ENCODE measurements at regions of chr14 and their contacts with region 1.

Region 1: DNA sequence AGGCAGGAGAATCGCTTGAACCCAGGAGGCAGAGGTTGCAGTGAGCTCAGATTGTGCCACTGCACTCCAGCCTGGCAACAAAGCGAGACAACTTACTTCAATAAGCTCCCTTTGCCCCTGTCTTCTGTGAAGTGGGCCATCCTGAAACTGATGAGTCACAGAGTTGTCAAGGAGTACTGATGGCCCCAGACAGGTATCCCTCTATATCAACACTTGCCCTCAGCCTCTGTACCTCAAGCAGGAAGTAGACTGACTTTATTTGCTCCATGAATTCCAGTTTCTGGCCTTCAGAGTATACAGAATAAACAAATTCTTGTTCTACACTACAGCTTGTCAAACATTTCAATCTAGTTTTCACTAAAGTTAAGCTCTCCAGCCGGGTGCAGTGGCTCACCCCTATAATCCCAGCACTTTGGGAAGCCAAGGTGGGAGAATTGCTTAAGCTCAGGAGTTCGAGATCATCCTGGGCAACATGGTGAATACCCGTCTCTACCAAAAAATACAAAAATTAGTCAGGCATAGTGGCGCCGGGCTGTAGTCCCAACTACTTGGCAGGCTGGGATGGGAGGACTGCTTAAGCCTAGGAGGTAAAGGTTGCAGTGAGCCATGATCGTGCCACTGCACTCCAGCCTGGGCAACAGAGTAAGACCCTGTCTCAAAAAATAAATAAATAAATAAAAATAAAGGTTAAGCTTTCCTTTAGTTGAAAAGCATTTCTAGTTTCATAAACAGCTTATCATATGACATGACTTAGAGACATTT is 16.4 kb upstream of the LRP10 start:
- DNase-seq: no peak
- H3K4me3 ChIP-seq: no peak overlapping the region
- H3K4me1 ChIP-seq: 0 out of 2 replicates have a peak, but pooled peaks cover 2% of the 10 kb centered on the region
- H3K27me3 ChIP-seq: no peaks in the 10 kb centered on the region

Region 2: DNA sequence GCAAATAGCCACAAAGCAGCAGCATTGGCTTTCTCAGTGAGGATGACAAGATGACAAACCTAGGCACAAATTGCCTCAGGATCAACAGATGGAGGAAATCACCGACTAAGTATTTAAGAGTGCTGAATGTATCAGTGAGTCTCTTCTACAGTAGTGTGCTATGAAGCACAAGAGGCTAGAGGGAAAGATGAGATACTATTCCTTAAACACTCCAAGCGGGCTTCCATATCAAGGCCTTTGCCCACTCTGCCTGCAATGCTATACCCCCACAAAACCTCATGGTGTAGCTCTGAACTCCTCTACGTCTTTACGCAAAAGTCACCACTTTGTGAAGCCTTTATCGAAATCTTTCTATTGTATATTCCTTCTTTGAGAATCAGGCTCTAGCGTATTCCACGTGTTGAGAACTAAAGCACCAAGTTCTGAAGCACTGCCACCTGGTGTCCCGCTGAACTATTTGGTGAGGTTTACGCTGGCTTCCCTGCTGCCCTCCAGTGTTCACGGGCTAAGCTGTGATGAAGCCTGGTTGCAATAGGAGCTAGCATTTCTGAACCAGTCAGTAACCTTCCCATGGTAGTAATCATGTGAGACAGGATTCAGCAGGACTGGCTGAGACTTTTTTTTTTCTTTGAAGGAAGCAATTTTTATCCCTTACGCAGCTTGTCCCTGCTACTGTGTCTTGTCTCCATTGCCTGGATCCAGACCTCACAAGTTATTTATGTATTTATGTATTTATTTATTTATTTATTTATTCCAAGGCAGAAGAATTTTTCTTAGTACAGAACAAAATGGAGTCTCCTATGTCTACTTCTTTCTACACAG is 755.0 kb before region 1 on chr14:
- in situ Hi-C with region 1: no loop called
- DNase-seq: peak; percentile 29 to 53
- H3K4me3 ChIP-seq: no peak overlapping the region
- H3K4me1 ChIP-seq: no peaks in the 10 kb centered on the region
- H3K27me3 ChIP-seq: no peaks in the 10 kb centered on the region

Region 3: GRCh38 chr14:22358726-22359125 is 496.4 kb before region 1 on chr14:
- in situ Hi-C with region 1: no loop called
- DNase-seq: no peak
- H3K4me3 ChIP-seq: no peak overlapping the region
- H3K4me1 ChIP-seq: no peaks in the 10 kb centered on the region
- H3K27me3 ChIP-seq: no peaks in the 10 kb centered on the region

Region 4: GRCh38 chr14:22556990-22557623 is 298.0 kb before region 1 on chr14:
- in situ Hi-C with region 1: loop called (anchors 5 kb)
- DNase-seq: peak; percentile 42 to 93
- H3K4me3 ChIP-seq: peak overlapping the region; percentile 19
- H3K4me1 ChIP-seq: peaks cover 6% of the 10 kb centered on the region
- H3K27me3 ChIP-seq: no peaks in the 10 kb centered on the region

Measured in HAP-1 (cell line).